ENCODE measurements at regions of chr19 and their contacts with region 1.

Region 1: GRCh38 chr19:41321600-41322270 is 11.8 kb downstream of the CCDC97 start:
- DNase-seq: peak; percentile 80
- ATAC-seq: peak; percentile 16
- H3K4me3 ChIP-seq: no peak overlapping the region
- H3K27ac ChIP-seq: peak overlapping the region; percentile 93
- H3K4me1 ChIP-seq: peaks cover 44% of the 10 kb centered on the region
- H3K27me3 ChIP-seq: no peaks in the 10 kb centered on the region
- CTCF ChIP-seq: peak; percentile 82
- POLR2A ChIP-seq: peak; percentile 56; the same call in 1 of the 2 replicates
- RAD21 ChIP-seq: peak; percentile 54

Region 2: GRCh38 chr19:41299755-41300314 is 21.9 kb before region 1 on chr19:
- CTCF ChIA-PET with region 1: interaction called, 3 read pairs
- POLR2A ChIA-PET with region 1: no interaction called
- dilution Hi-C with region 1: no loop called
- in situ Hi-C with region 1: no loop called
- intact Hi-C with region 1: loop called (anchors 1 kb)
- DNase-seq: peak; percentile 92
- ATAC-seq: peak; percentile 74
- H3K4me3 ChIP-seq: no peak overlapping the region
- H3K27ac ChIP-seq: no peak overlapping the region
- H3K4me1 ChIP-seq: peaks cover 24% of the 10 kb centered on the region
- H3K27me3 ChIP-seq: no peaks in the 10 kb centered on the region
- CTCF ChIP-seq: no peak
- POLR2A ChIP-seq: no peak
- RAD21 ChIP-seq: no peak

Region 3: DNA sequence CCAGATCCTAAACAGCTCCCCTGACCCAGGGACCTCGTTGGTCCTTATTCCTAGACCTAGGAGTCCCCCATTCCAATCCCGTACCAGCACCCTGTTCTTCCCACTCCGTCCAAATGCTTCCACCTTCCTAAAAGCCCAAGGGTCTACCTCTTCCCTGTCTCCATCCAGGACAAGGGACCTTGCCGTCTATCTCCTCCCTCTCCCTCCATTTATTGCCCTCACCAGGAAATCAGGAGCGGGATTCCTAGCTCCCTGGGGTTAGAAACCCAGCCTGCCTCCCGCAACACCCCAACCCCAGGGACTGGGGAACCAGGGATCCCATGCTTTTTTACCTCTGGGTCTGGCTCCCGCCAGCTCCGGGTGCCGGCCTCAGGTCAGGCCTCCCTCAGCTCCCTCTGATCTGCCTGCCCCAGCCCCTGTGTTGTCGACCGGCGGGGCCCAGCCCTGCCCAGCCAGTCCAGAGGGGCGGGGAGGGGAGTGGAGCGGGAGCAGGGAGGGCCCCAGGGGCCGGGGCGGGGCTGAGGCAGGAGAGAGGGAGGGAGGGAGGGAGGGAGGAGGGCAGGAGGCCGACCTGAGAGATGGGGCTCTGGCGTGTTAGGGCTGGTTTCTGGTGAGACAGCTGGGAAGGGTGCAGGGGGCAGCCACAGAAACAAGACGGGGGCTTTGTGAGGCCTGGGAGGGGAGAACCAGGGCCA is 105.4 kb after region 1 on chr19 and contains the start of gene B3GNT8:
- CTCF ChIA-PET with region 1: interaction called, 3 read pairs
- POLR2A ChIA-PET with region 1: no interaction called
- dilution Hi-C with region 1: no loop called
- in situ Hi-C with region 1: no loop called
- intact Hi-C with region 1: loop called (anchors 1 kb)
- DNase-seq: peak; percentile 34
- ATAC-seq: peak; percentile 93
- H3K4me3 ChIP-seq: peak within 1 kb of the TSS; percentile 27
- H3K27ac ChIP-seq: peak within 1 kb of the TSS; percentile 3; the same call in 1 of the 2 replicates
- H3K4me1 ChIP-seq: peaks cover 10% of the 10 kb centered on the region; the same call in 1 of the 2 replicates
- H3K27me3 ChIP-seq: no peaks in the 10 kb centered on the region
- CTCF ChIP-seq: no peak
- POLR2A ChIP-seq: no peak
- RAD21 ChIP-seq: no peak
- total RNA-seq, gene B3GNT8: under 0.01 and 0.36 TPM in 2 replicates